ENCODE measurements at regions of chr2 and their contacts with region 1.

Region 1: GRCh38 chr2:101419096-101419663 is 31.9 kb upstream of the CREG2 start:
- DNase-seq: peak; percentile 52
- H3K4me3 Mint-ChIP-seq: no peak overlapping the region
- H3K27ac Mint-ChIP-seq: no peak overlapping the region
- H3K4me1 Mint-ChIP-seq: no peaks in the 10 kb centered on the region
- H3K27me3 Mint-ChIP-seq: no peaks in the 10 kb centered on the region

Region 2: DNA sequence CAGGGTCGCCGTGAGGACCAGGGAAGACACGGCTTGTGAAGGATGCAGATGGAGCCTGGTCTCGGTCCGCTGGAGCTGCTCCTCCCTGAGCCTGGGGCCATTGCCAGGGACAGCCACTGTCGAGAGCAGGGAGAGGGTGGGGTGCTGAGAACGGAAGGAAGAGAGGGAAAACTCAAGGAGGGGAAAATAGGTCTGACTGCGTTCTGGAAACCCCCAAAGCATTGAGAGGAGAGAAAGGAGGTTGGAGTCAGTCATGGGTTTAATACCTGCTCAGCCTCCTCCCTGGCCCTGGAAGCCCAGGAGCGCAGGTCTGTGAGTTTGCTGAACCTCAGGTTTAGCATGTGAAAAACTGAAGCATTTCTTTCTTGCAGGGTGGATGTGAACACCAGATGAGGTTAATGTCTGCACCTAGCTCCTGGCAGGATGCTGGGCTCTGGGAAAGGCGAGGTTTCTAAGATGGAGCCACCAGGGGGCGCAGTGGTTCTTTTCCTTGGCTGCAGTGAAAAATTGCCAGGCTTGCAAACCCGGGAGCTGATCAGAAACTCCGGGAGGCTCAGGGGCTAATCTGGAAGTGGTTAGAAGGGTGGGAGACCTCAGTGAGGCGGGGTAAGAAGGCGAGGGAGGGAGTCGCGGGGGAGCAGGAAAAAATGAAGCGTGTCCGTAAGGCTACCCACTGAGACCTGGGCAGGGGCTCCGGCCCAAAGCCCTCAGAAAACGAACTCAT is 77.1 kb before region 1 on chr2:
- intact Hi-C with region 1: loop called (anchors 2 kb)
- DNase-seq: peak; percentile 46
- H3K4me3 Mint-ChIP-seq: no peak overlapping the region
- H3K27ac Mint-ChIP-seq: no peak overlapping the region
- H3K4me1 Mint-ChIP-seq: peaks cover 33% of the 10 kb centered on the region
- H3K27me3 Mint-ChIP-seq: peaks cover 18% of the 10 kb centered on the region

Region 3: DNA sequence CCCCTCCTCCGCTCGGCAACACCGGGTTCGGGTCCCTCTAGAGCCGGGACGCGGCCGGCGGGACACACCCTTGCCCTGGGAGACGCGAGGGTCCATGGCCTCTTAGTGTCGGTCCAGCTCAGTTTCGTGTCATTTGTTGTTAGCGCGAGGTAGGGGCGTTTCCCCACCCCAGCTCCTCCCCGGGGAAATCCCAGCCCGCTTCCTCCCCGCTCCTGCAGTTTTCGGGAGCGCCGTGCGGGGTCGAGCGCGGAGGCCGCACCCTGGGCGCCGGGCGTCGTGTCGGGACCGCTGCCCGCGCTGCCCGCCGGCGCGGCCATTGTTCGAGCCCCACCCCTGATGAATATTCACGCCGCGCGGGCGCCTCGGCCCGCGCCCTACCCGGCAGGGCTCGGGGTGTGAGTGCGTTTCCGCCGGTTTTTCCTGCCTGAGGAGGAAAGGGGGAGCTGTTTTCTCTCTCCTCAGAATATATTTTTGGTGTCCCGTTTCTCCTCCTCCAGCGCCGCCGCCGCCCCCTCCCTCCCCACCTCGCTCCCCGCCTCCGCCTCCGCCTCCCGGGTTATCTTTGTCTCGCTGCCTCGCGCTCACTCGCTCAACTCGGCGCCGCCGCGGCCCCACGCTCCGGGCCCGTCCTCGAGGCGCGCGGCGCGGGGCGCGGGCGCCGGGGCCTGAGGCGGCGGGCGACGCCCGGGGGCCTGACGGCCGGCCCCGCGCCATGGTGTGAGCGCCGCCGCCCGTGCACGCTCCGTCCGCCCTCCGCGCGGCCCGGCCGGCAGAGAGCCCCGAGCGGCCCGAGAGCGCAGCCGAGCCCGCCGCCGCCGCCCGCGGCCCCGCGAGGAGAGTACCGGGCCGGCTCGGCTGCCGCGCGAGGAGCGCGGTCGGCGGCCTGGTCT is 278.2 kb after region 1 on chr2 and contains the start of gene MAP4K4:
- intact Hi-C with region 1: loop called (anchors 2 kb)
- DNase-seq: peak; percentile 69
- H3K4me3 Mint-ChIP-seq: peak within 1 kb of the TSS; percentile 88
- H3K27ac Mint-ChIP-seq: peak within 1 kb of the TSS; percentile 88
- H3K4me1 Mint-ChIP-seq: peaks cover 24% of the 10 kb centered on the region
- H3K27me3 Mint-ChIP-seq: no peaks in the 10 kb centered on the region
- total RNA-seq, gene MAP4K4: 54.3 and 54.5 TPM in 2 replicates

Region 4: GRCh38 chr2:101823347-101823791 is 404.2 kb after region 1 on chr2:
- intact Hi-C with region 1: loop called (anchors 2 kb)
- DNase-seq: peak; percentile 63
- H3K4me3 Mint-ChIP-seq: peak overlapping the region; percentile 32
- H3K27ac Mint-ChIP-seq: peak overlapping the region; percentile 30
- H3K4me1 Mint-ChIP-seq: peaks cover 75% of the 10 kb centered on the region
- H3K27me3 Mint-ChIP-seq: no peaks in the 10 kb centered on the region

Region 5: GRCh38 chr2:101873543-101873942 is 454.4 kb after region 1 on chr2:
- intact Hi-C with region 1: loop called (anchors 1 kb)
- DNase-seq: no peak
- H3K4me3 Mint-ChIP-seq: no peak overlapping the region
- H3K27ac Mint-ChIP-seq: peak overlapping the region; percentile 20
- H3K4me1 Mint-ChIP-seq: peaks cover 8% of the 10 kb centered on the region
- H3K27me3 Mint-ChIP-seq: no peaks in the 10 kb centered on the region